ENCODE measurements at regions of chr3 and their contacts with region 1.

Region 1: GRCh38 chr3:179147873-179148615 is at the start of gene PIK3CA:
- DNase-seq: peak; percentile 90 to 97
- H3K4me3 ChIP-seq: peak within 1 kb of the TSS; percentile 75
- H3K4me3 Mint-ChIP-seq: no peak within 1 kb of the TSS
- H3K27ac Mint-ChIP-seq: no peak within 1 kb of the TSS
- H3K4me1 ChIP-seq: no peaks in the 10 kb centered on the region
- H3K4me1 Mint-ChIP-seq: peaks cover 7% of the 10 kb centered on the region
- H3K27me3 ChIP-seq: no peaks in the 10 kb centered on the region
- H3K27me3 Mint-ChIP-seq: no peaks in the 10 kb centered on the region
- CTCF ChIP-seq: no peak
- total RNA-seq, gene PIK3CA: 8.4 and 10.6 TPM in 2 replicates

Region 2: GRCh38 chr3:179015551-179016020 is 132.5 kb before region 1 on chr3:
- CTCF ChIA-PET with region 1: no interaction called
- POLR2A ChIA-PET with region 1: no interaction called
- intact Hi-C with region 1: loop called (anchors 2 kb)
- DNase-seq: peak; percentile 47 to 80
- H3K4me3 ChIP-seq: no peak overlapping the region
- H3K4me3 Mint-ChIP-seq: no peak overlapping the region
- H3K27ac Mint-ChIP-seq: no peak overlapping the region
- H3K4me1 ChIP-seq: no peaks in the 10 kb centered on the region
- H3K4me1 Mint-ChIP-seq: no peaks in the 10 kb centered on the region
- H3K27me3 ChIP-seq: no peaks in the 10 kb centered on the region
- H3K27me3 Mint-ChIP-seq: peaks cover 2% of the 10 kb centered on the region
- CTCF ChIP-seq: peak; percentile 78 to 81

Region 3: GRCh38 chr3:179133575-179133974 is 14.5 kb before region 1 on chr3:
- CTCF ChIA-PET with region 1: no interaction called
- POLR2A ChIA-PET with region 1: no interaction called
- intact Hi-C with region 1: loop called (anchors 1 kb)
- DNase-seq: no peak
- H3K4me3 ChIP-seq: no peak overlapping the region
- H3K4me3 Mint-ChIP-seq: no peak overlapping the region
- H3K27ac Mint-ChIP-seq: no peak overlapping the region
- H3K4me1 ChIP-seq: no peaks in the 10 kb centered on the region
- H3K4me1 Mint-ChIP-seq: no peaks in the 10 kb centered on the region
- H3K27me3 ChIP-seq: no peaks in the 10 kb centered on the region
- H3K27me3 Mint-ChIP-seq: peaks cover 8% of the 10 kb centered on the region
- CTCF ChIP-seq: no peak

Region 4: DNA sequence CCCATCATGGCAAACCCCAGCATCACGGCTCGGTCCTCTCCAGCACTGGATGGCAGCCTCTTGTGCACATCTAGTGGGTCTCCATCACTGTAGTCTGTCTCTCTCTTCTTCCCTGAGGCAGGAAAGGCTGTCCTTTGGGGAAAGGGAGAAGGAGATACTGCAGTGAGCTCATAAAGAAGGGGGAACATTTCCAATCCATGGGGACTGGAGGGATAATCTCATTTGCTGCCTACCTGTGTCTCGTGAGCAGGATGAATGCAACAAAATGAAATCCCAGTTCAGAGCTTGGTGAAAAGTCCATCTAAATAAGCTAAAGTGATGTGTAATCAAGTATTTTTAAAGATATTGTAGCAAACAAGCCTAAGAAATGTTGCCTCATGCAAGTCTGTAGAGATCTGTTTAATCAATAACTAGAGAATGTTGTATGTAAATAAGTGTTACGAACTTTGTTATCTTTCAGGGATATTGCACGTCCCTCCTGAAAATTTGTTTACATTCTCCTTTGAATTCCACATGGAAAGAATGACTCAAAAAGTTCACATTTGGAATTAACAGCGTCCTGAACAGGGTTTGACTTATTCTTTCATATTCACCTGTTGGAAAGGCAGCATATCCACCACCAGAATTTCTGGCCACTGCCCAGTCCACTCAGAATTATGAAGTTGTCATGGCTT is 102.9 kb after region 1 on chr3 and contains the start of gene KCNMB3:
- CTCF ChIA-PET with region 1: no interaction called
- POLR2A ChIA-PET with region 1: no interaction called
- intact Hi-C with region 1: loop called (anchors 5 kb)
- DNase-seq: peak in 1 of 2 experiments; percentile 32
- H3K4me3 ChIP-seq: no peak within 1 kb of the TSS
- H3K4me3 Mint-ChIP-seq: no peak within 1 kb of the TSS
- H3K27ac Mint-ChIP-seq: peak within 1 kb of the TSS; percentile 67
- H3K4me1 ChIP-seq: peaks cover 17% of the 10 kb centered on the region
- H3K4me1 Mint-ChIP-seq: peaks cover 11% of the 10 kb centered on the region
- H3K27me3 ChIP-seq: no peaks in the 10 kb centered on the region
- H3K27me3 Mint-ChIP-seq: no peaks in the 10 kb centered on the region
- CTCF ChIP-seq: no peak
- total RNA-seq, gene KCNMB3: 6.7 and 6.9 TPM in 2 replicates

Region 5: GRCh38 chr3:179322286-179323196 is 174.5 kb after region 1 on chr3 and contains the start of gene ZNF639:
- CTCF ChIA-PET with region 1: interaction called, 13 read pairs
- POLR2A ChIA-PET with region 1: interaction called, 4 read pairs
- intact Hi-C with region 1: loop called (anchors 1 kb)
- DNase-seq: peak; percentile 84 to 92
- H3K4me3 ChIP-seq: peak within 1 kb of the TSS; percentile 76
- H3K4me3 Mint-ChIP-seq: peak within 1 kb of the TSS; percentile 78
- H3K27ac Mint-ChIP-seq: peak within 1 kb of the TSS; percentile 48
- H3K4me1 ChIP-seq: peaks cover 5% of the 10 kb centered on the region; the same call in 1 of the 2 replicates
- H3K4me1 Mint-ChIP-seq: peaks cover 6% of the 10 kb centered on the region
- H3K27me3 ChIP-seq: no peaks in the 10 kb centered on the region
- H3K27me3 Mint-ChIP-seq: no peaks in the 10 kb centered on the region
- CTCF ChIP-seq: peak; percentile 67 to 86
- total RNA-seq, gene ZNF639: 28.6 TPM in 2 replicates

Region 6: GRCh38 chr3:179398574-179399231 is 250.7 kb after region 1 on chr3:
- CTCF ChIA-PET with region 1: no interaction called
- POLR2A ChIA-PET with region 1: no interaction called
- intact Hi-C with region 1: no loop called
- DNase-seq: no peak
- H3K4me3 ChIP-seq: no peak overlapping the region
- H3K4me3 Mint-ChIP-seq: no peak overlapping the region
- H3K27ac Mint-ChIP-seq: no peak overlapping the region
- H3K4me1 ChIP-seq: no peaks in the 10 kb centered on the region
- H3K4me1 Mint-ChIP-seq: no peaks in the 10 kb centered on the region
- H3K27me3 ChIP-seq: no peaks in the 10 kb centered on the region
- H3K27me3 Mint-ChIP-seq: no peaks in the 10 kb centered on the region
- CTCF ChIP-seq: no peak

Region 7: DNA sequence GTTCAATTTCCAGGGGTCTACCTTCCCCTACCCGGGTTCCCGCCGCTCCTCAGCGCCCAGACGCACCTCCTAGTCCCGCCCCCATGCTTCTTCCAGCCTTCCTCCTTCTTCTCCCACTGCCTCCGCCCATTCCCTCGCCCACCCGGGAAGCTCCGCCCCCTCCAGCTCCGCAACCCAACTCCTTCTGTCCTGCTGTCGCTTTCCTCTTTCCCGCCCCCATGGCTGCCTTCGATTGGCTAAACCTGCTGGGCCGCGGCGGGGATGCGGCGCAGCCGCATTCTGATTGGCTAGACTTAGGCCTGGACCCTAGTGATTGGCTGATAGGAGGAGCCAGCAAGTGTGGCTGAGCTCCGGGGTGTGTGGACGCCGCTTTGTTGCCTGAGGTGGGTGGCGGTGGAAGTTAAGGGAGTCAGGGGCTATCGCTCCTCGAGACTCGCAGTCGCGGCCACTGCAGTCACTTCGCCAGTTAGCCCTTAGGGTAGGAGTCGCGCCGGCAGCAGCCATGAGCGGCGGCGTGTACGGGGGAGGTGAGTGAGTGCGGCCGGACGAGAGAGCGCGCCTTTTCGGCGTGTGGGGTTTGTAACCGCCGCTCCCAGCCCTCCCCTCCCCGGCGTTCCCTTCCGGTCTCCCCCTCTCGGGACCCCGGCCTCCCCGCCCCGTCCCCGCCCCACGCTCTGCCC is 414.7 kb after region 1 on chr3 and contains the start of gene ACTL6A:
- CTCF ChIA-PET with region 1: no interaction called
- POLR2A ChIA-PET with region 1: interaction called, 7 read pairs
- intact Hi-C with region 1: loop called (anchors 5 kb)
- DNase-seq: peak; percentile 99 to 100
- H3K4me3 ChIP-seq: peak within 1 kb of the TSS; percentile 78
- H3K4me3 Mint-ChIP-seq: peak within 1 kb of the TSS; percentile 97
- H3K27ac Mint-ChIP-seq: peak within 1 kb of the TSS; percentile 96
- H3K4me1 ChIP-seq: peaks cover 5% of the 10 kb centered on the region; the same call in 1 of the 2 replicates
- H3K4me1 Mint-ChIP-seq: peaks cover 6% of the 10 kb centered on the region
- H3K27me3 ChIP-seq: no peaks in the 10 kb centered on the region
- H3K27me3 Mint-ChIP-seq: no peaks in the 10 kb centered on the region
- CTCF ChIP-seq: no peak
- total RNA-seq, gene ACTL6A: 75.0 and 89.2 TPM in 2 replicates

Measured in Caco-2 (cell line).